Activated CD4-positive, alpha-beta T cell treated with anti-CD3 and anti-CD28 coated beads for 36 hours (primary cell): ENCODE measurements at regions of chr14 and their contacts with region 1.

Region 1: GRCh38 chr14:72291908-72292688 is 359.9 kb downstream of the RGS6 start:
- DNase-seq: peak; percentile 18
- ATAC-seq: peak; percentile 51
- H3K4me3 Mint-ChIP-seq: no peak overlapping the region
- H3K27ac Mint-ChIP-seq: no peak overlapping the region
- H3K4me1 Mint-ChIP-seq: no peaks in the 10 kb centered on the region
- H3K27me3 Mint-ChIP-seq: peaks cover 19% of the 10 kb centered on the region

Region 2: DNA sequence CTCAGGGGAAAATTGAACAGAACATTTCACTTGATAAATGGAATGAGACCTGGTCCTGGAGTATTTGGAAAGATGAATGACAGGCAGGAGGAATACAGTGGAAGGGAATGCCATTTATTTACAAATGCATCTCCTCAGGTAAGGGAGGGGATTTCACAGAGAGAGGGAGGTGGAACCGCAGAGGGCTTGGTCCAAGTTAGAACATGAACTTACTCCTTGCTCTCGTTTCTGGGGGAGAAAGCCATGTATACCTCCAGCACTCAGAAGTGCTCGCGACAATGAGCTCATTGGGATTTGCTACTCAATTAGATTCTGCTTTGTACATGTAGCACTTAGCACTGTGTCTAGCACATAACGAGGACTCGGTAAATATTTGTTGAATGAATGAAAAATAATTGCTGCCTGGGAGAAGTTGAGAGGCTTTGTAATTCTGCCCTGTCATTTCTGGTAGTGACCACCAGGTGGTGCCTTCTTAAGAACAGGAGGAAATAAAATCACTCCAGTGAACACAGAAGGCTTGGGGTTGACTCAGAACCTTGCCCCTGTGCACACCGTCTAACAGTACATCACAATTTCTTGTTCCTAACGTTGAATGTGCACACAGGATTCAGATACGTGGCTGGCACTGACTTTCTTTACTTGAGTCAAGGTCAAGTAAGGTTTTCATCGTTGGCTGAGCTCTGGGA is 268.2 kb before region 1 on chr14:
- CTCF ChIA-PET with region 1: interaction called, 4 read pairs
- POLR2A ChIA-PET with region 1: interaction called, 6 read pairs
- intact Hi-C with region 1: loop called (anchors 2 to 10 kb)
- DNase-seq: peak; percentile 64
- ATAC-seq: peak; percentile 93
- H3K4me3 Mint-ChIP-seq: no peak overlapping the region
- H3K27ac Mint-ChIP-seq: no peak overlapping the region
- H3K4me1 Mint-ChIP-seq: peaks cover 8% of the 10 kb centered on the region
- H3K27me3 Mint-ChIP-seq: peaks cover 17% of the 10 kb centered on the region

Region 3: DNA sequence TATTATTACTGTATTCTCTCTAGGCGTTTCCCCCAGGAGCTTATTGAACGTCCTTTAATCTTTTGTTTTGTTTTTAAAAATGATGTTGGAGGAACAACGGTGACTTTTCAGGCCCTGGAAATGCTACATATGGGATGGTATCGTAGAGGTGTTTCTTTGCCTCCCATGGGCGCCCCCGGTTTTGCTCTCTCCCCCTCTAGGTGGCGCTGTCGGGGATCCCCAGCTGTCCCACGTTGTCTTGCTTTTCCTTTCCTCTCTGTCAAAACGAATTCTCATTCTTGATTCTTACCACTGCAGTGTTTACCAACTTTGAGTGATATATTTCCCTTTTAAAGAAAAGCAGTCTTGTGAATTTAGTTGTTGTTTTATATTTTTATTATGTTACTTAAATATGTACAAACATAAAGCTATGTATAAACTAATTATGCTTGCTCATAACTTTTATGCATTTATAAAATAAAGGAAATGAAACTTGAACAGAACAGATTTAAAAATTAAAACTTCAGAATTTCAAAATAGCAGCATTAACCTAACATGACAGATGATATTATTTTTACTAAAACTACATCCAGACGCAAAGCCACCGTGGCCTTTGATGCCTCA is 188.0 kb before region 1 on chr14:
- CTCF ChIA-PET with region 1: no interaction called
- POLR2A ChIA-PET with region 1: no interaction called
- intact Hi-C with region 1: loop called in 1 of 2 experiments (anchors 1 kb)
- DNase-seq: peak; percentile 75
- ATAC-seq: peak; percentile 64
- H3K4me3 Mint-ChIP-seq: no peak overlapping the region
- H3K27ac Mint-ChIP-seq: no peak overlapping the region
- H3K4me1 Mint-ChIP-seq: no peaks in the 10 kb centered on the region
- H3K27me3 Mint-ChIP-seq: peaks cover 7% of the 10 kb centered on the region